IMR-90 (cell line): ENCODE measurements at regions of chr7 and their contacts with region 1.

Region 1: DNA sequence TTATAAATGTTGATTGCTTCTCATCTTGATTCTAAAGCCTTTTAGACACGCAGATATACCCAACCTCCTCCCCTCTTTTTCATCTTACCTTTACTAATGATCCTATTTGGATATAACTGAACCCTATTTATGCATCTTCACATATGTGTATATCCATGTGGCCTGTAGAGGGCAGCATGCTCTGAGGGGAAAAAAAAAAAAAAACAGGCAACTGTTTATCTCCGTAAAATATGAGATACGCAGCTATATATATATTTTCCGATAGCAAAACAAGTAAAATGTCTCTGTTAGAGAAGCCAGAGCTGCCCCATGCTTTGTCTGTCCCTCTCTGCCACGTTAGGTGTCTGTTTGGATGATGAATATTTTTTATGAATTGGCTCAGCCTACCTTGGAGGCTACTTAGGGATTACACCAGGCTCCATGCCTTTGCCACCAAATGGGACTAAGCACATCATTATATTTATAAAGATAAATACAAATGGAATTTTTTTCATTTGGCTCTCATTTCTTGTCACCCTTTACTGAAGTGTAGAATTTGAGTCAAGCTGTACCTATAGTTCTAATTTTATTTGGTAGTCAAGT is 174.8 kb upstream of the FZD1 start:
- DNase-seq: peak; percentile 48
- ATAC-seq: peak; percentile 74
- H3K4me3 ChIP-seq: peak overlapping the region; percentile 33; the same call in 1 of the 2 replicates
- H3K27ac ChIP-seq: no peak overlapping the region
- H3K4me1 ChIP-seq: no peaks in the 10 kb centered on the region
- H3K27me3 ChIP-seq: no peaks in the 10 kb centered on the region
- CTCF ChIP-seq: peak; percentile 73
- POLR2A ChIP-seq: no peak
- RAD21 ChIP-seq: peak; percentile 75

Region 2: DNA sequence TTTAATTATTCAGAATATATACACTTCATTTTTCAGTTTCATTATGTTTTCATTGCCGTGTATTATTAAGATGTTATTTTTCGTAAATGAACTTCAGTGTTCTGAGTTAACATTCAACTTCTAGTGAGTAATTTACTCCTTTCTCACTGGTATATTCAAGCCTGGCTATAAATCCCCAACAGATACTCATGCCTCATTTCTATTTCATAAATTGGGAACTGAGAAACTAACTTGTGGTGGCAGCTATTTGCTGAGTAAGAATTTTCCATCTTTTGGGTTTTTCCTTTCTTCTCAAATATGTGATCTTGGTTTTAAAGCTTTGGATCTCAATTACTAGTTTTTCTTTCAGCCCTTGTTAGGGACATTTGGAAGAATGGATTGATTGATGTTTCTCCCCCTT is 212.3 kb before region 1 on chr7:
- CTCF ChIA-PET with region 1: no interaction called
- POLR2A ChIA-PET with region 1: no interaction called
- dilution Hi-C with region 1: no loop called
- in situ Hi-C with region 1: no loop called
- intact Hi-C with region 1: no loop called
- DNase-seq: no peak
- ATAC-seq: no peak
- H3K4me3 ChIP-seq: no peak overlapping the region
- H3K27ac ChIP-seq: no peak overlapping the region
- H3K4me1 ChIP-seq: no peaks in the 10 kb centered on the region
- H3K27me3 ChIP-seq: no peaks in the 10 kb centered on the region
- CTCF ChIP-seq: no peak
- POLR2A ChIP-seq: no peak
- RAD21 ChIP-seq: no peak

Region 3: GRCh38 chr7:91465595-91466061 is 376.2 kb after region 1 on chr7:
- CTCF ChIA-PET with region 1: no interaction called
- POLR2A ChIA-PET with region 1: no interaction called
- dilution Hi-C with region 1: no loop called
- in situ Hi-C with region 1: no loop called
- intact Hi-C with region 1: loop called (anchors 10 kb)
- DNase-seq: no peak
- ATAC-seq: no peak
- H3K4me3 ChIP-seq: no peak overlapping the region
- H3K27ac ChIP-seq: no peak overlapping the region
- H3K4me1 ChIP-seq: no peaks in the 10 kb centered on the region
- H3K27me3 ChIP-seq: no peaks in the 10 kb centered on the region
- CTCF ChIP-seq: no peak
- POLR2A ChIP-seq: no peak
- RAD21 ChIP-seq: no peak

Region 4: GRCh38 chr7:91609525-91609924 is 520.1 kb after region 1 on chr7:
- CTCF ChIA-PET with region 1: no interaction called
- POLR2A ChIA-PET with region 1: no interaction called
- dilution Hi-C with region 1: no loop called
- in situ Hi-C with region 1: loop called (anchors 25 kb)
- intact Hi-C with region 1: no loop called
- DNase-seq: no peak
- ATAC-seq: no peak
- H3K4me3 ChIP-seq: no peak overlapping the region
- H3K27ac ChIP-seq: no peak overlapping the region
- H3K4me1 ChIP-seq: no peaks in the 10 kb centered on the region
- H3K27me3 ChIP-seq: no peaks in the 10 kb centered on the region; the same call in 1 of the 2 replicates
- CTCF ChIP-seq: no peak
- POLR2A ChIP-seq: no peak
- RAD21 ChIP-seq: no peak

Region 5: DNA sequence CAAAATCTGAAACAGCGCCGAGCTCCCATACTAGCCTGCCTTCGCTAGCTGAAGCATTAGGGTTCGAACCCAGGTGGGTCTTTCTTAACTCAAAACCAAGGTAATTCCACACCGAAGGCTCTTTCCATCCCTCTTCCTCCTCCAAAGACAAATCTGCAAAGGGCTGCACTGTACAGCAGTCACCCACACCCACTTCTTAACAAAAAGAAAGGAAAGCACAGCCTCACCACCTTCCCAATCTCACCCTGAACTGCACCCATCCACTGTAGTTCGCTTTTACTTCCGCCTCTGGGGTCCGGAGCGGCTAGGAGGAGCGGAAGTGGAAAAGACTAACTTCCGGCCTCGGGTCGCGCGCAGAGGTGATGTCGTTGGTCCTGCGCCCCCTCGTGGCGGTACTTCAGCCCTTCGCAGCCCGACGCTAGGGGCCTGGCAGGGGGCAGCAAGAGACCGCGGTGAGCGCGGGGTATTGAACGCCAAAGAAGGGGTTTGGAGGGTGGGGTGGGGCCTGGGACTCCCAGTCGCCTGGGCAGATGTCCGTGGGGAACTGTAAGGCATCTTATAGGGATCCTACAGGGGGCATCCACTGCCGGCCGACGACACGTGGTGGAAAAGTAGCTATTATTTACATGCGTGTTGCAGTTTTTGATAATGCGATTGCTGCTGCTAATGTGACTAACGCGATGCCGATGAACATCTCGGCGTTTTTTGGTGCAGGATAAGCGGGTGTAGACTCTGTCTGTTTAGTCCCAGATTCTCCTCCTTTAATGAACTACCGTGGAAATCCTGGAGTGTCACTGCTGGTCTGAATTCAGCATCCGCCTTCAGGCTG is 791.2 kb after region 1 on chr7 and contains the start of gene MTERF1:
- CTCF ChIA-PET with region 1: no interaction called
- POLR2A ChIA-PET with region 1: no interaction called
- dilution Hi-C with region 1: no loop called
- in situ Hi-C with region 1: loop called (anchors 10 kb)
- intact Hi-C with region 1: no loop called
- DNase-seq: peak; percentile 88
- ATAC-seq: peak; percentile 96
- H3K4me3 ChIP-seq: peak within 1 kb of the TSS; percentile 97
- H3K27ac ChIP-seq: peak within 1 kb of the TSS; percentile 77
- H3K4me1 ChIP-seq: no peaks in the 10 kb centered on the region
- H3K27me3 ChIP-seq: no peaks in the 10 kb centered on the region
- CTCF ChIP-seq: peak; percentile 100
- POLR2A ChIP-seq: peak; percentile 45; the same call in 1 of the 2 replicates
- RAD21 ChIP-seq: peak; percentile 73
- total RNA-seq, gene MTERF1: 7.0 and 16.7 TPM in 2 replicates